Right cardiac atrium (tissue), 5 donors: ENCODE measurements at regions of chr20 and their contacts with region 1.

Region 1: GRCh38 chr20:46307139-46307998 is 929 bp downstream of the CDH22 start:
- DNase-seq: peak in 2 of 3 donors; percentile 66 to 78
- ATAC-seq: peak; percentile 36 to 49
- H3K4me3 ChIP-seq: peak overlapping the region; percentile 53
- H3K27ac ChIP-seq: no peak overlapping the region
- H3K4me1 ChIP-seq: peaks cover 1% of the 10 kb centered on the region
- H3K27me3 ChIP-seq: no peaks in the 10 kb centered on the region

Region 2: DNA sequence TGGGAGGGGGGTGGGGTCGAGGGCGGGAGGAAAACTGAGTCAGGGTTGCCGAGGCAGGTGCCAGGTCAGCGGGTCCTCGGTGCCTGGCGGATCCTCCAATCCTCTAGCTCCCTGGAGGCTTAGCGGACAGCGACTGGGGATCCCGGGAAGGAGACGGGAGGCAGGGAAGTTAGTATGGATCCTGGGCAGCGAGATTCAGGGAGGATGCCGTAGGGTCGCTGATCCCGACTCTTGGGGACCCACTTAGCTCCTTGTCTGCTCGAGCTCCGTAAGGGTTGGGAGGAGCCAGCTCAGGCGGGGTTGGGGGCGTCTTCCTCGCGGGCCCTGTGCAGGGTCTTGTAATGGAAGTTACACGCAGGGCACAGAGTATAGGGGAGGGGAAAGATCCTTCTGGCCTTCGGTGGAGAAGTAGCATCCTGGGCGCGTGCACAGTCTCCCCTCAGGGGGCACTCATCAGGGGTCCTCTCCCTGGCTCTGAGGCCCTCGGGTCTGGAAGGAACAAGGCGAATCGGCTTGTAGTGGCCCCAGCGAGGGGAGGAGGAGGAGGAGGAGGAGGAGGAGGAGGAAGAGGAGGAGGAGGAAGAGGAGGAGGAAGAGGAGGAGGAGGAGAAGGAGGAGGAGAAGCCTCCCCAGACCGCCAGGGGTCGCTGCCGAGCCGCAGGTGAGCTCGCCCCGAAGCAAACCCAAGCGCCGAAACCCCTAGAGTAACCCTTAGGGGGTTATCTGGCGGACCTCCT is 284.8 kb before region 1 on chr20:
- intact Hi-C with region 1: no loop called
- DNase-seq: peak; percentile 45 to 85 (median 82)
- ATAC-seq: peak; percentile 39 to 64
- H3K4me3 ChIP-seq: peak overlapping the region; percentile 1
- H3K27ac ChIP-seq: no peak overlapping the region
- H3K4me1 ChIP-seq: no peaks in the 10 kb centered on the region
- H3K27me3 ChIP-seq: no peaks in the 10 kb centered on the region

Region 3: DNA sequence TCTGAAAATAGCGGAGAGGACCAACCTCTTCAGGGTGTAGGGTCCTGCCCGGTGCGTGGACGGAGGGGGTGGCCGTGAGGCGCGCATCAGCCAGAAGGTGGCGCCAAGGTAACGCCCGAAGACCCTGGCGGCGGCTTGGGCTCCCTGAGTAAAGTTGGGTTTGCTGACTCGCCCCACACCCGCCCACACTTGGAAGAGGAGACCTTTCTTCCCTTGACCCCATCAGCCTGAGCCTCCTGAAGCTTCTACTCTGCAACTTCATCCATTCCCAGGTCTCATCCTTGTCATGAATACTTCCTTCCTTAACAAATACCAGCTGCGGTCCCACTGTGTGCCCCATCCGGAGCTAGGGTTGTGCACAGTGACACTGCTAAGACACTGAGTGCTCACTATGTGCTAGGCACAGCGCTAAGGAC is 174.7 kb before region 1 on chr20:
- intact Hi-C with region 1: loop called in 2 of 4 experiments (anchors 5 kb)
- DNase-seq: peak; percentile 76 to 90 (median 89)
- ATAC-seq: peak; percentile 84 to 87
- H3K4me3 ChIP-seq: no peak overlapping the region
- H3K27ac ChIP-seq: no peak overlapping the region
- H3K4me1 ChIP-seq: no peaks in the 10 kb centered on the region
- H3K27me3 ChIP-seq: no peaks in the 10 kb centered on the region

Region 4: DNA sequence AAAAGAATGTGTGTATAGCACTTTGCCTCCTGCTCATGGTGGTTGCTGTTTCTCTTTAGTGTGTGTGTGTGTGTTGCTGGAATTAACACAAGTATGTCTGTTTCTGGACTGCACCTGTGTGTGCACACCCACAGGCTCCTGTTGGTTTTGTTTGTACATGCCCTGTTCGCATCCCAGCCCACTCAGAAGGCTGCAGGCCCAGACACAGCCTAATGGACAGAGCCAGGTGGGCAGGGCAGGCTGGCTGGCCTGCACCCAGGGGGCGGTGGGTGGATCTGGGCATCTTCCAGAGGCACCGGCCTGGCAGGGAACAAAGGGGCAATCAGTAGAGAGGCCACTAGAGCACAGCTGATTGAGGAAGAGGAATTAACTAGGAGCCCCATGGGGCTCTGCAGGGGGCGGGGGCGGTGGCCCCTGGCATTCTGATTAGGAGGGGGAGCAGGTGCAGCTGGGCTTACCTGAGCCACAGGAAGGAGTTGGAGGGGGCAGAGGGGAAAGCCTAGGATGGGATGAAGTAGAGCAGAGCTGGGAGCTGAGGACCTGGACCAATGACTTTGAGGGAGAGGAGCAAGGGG is 167.4 kb before region 1 on chr20:
- intact Hi-C with region 1: loop called in 1 of 4 experiments (anchors 5 kb)
- DNase-seq: no peak
- ATAC-seq: no peak
- H3K4me3 ChIP-seq: no peak overlapping the region
- H3K27ac ChIP-seq: no peak overlapping the region
- H3K4me1 ChIP-seq: no peaks in the 10 kb centered on the region
- H3K27me3 ChIP-seq: no peaks in the 10 kb centered on the region

Region 5: DNA sequence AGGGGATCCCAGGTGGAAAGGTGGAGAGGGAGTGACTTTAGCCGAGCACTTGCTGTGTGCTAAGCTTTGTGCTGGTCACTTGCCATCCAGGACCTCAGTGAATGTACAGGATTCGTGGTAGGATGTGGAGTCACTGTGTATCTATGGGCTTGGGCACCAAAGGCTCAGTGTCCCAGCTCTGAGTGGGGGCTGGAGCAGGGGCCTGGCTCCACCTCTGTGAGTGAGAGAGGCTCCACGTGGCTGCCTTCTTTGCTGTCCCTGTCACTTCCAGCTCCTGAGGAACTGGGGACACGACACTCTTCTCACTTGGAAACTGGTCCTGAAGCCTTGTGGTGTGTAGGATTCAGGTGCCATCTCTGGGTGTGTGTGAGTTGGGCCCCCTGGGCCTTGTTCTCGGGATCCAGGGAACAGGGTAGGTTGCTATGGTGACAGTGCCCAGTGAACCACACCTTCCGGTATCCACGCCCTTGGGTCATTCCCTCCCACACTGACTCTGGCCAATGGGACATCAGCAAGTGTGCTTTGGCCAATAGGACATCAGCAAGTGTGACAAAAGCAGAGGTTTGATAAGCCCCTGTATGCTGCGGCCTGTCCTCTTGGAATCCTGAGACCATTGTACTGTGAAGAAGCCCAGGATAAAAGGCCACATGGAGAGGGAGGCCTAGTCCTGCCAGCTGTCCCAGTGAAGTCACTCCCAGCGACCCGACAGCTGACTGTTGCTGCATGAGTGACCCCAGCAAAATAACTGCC is 86.7 kb before region 1 on chr20:
- intact Hi-C with region 1: loop called in 1 of 4 experiments (anchors 10 kb)
- DNase-seq: peak in 1 of 3 donors; percentile 49
- ATAC-seq: peak; percentile 34 to 59
- H3K4me3 ChIP-seq: no peak overlapping the region
- H3K27ac ChIP-seq: peak overlapping the region; percentile 66
- H3K4me1 ChIP-seq: peaks cover 9% of the 10 kb centered on the region
- H3K27me3 ChIP-seq: no peaks in the 10 kb centered on the region

Region 6: DNA sequence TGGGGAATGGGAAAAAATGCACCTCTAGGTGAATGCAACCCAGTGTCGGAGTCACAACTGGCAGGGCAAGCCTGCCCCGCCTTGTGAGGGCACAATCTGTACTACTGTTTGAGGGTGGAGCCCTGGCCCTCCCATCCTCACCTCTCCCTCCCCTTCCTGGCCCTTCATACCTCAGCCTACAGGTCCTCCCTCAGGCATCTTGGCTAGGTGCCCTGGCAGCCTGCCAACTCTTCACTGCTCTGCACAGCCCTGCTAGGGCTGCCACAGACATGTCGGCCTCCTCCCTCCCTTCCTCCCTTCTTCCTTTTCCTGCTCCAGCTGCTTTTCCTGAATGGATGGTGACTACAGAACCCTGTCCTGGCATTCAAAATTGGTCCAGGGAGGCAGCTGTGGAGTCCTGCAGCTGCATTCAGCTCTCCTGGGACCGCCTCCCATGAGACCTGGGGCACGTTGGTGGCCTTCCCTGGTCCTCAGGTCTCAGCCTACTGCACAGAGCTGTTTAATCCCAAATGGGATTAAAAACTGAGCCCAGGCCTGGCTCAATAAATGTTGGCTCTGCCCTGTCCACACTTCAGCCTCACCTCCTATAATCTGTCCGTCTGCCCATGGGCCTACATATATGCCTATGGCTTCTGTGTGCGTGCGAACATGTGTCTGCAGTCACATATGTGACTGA is 51.8 kb before region 1 on chr20:
- intact Hi-C with region 1: loop called in 1 of 4 experiments (anchors 10 kb)
- DNase-seq: peak; percentile 73 to 90 (median 89)
- ATAC-seq: peak; percentile 79 to 84
- H3K4me3 ChIP-seq: no peak overlapping the region
- H3K27ac ChIP-seq: no peak overlapping the region
- H3K4me1 ChIP-seq: no peaks in the 10 kb centered on the region
- H3K27me3 ChIP-seq: no peaks in the 10 kb centered on the region

Region 7: GRCh38 chr20:46349035-46349741 is 41.8 kb after region 1 on chr20:
- intact Hi-C with region 1: loop called in 1 of 4 experiments (anchors 2 kb)
- DNase-seq: peak; percentile 63 to 86 (median 86)
- ATAC-seq: peak; percentile 71 to 78
- H3K4me3 ChIP-seq: no peak overlapping the region
- H3K27ac ChIP-seq: no peak overlapping the region
- H3K4me1 ChIP-seq: peaks cover 2% of the 10 kb centered on the region
- H3K27me3 ChIP-seq: no peaks in the 10 kb centered on the region